CD8-positive, alpha-beta T cell (primary cell): ENCODE measurements at regions of chr2 and their contacts with region 1.

Region 1: GRCh38 chr2:112726497-112727190 is 5.8 kb downstream of the NT5DC4 start:
- DNase-seq: peak; percentile 74 to 93 (median 85)
- ATAC-seq: peak; percentile 99
- H3K4me3 ChIP-seq: no peak overlapping the region
- H3K4me3 Mint-ChIP-seq: no peak overlapping the region
- H3K27ac ChIP-seq: no peak overlapping the region
- H3K27ac Mint-ChIP-seq: no peak overlapping the region
- H3K4me1 ChIP-seq: no peaks in the 10 kb centered on the region
- H3K4me1 Mint-ChIP-seq: peaks cover 4% of the 10 kb centered on the region
- H3K27me3 ChIP-seq: no peaks in the 10 kb centered on the region
- H3K27me3 Mint-ChIP-seq: peaks cover 3% of the 10 kb centered on the region
- CTCF ChIP-seq: peak; percentile 87

Region 2: DNA sequence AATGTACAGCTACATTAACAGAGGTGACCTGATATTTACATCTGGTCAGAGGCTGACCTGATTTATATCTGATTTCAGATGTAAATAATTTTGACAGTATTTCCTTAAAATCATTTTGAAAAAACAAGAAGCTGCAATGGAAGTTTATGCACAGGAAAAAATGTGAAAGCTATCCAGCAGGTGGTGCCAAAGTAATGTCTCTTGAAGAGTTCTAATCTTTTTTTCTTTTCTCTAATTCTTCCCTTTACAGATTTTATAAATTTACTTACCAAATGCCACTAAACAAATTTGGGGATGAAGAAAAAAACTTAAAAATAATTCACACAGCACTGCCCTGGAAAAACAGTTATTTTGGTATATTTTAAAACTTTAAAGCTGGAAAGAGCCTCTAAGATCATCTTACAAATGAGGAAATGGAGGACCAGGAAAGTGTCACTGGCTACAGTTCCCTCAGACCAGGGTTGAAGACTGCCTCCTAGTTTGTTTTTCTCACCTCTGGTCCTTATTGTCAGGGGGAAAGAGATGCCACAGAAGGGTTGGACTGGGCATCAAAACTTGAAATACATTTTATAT is 604.9 kb before region 1 on chr2:
- CTCF ChIA-PET with region 1: no interaction called
- POLR2A ChIA-PET with region 1: no interaction called
- intact Hi-C with region 1: loop called in 1 of 2 experiments (anchors 10 kb)
- DNase-seq: peak in 7 of 9 experiments; percentile 21 to 70 (median 53)
- ATAC-seq: peak; percentile 42
- H3K4me3 ChIP-seq: no peak overlapping the region
- H3K4me3 Mint-ChIP-seq: no peak overlapping the region
- H3K27ac ChIP-seq: no peak overlapping the region
- H3K27ac Mint-ChIP-seq: no peak overlapping the region
- H3K4me1 ChIP-seq: no peaks in the 10 kb centered on the region
- H3K4me1 Mint-ChIP-seq: no peaks in the 10 kb centered on the region
- H3K27me3 ChIP-seq: no peaks in the 10 kb centered on the region
- H3K27me3 Mint-ChIP-seq: no peaks in the 10 kb centered on the region
- CTCF ChIP-seq: peak; percentile 85

Region 3: DNA sequence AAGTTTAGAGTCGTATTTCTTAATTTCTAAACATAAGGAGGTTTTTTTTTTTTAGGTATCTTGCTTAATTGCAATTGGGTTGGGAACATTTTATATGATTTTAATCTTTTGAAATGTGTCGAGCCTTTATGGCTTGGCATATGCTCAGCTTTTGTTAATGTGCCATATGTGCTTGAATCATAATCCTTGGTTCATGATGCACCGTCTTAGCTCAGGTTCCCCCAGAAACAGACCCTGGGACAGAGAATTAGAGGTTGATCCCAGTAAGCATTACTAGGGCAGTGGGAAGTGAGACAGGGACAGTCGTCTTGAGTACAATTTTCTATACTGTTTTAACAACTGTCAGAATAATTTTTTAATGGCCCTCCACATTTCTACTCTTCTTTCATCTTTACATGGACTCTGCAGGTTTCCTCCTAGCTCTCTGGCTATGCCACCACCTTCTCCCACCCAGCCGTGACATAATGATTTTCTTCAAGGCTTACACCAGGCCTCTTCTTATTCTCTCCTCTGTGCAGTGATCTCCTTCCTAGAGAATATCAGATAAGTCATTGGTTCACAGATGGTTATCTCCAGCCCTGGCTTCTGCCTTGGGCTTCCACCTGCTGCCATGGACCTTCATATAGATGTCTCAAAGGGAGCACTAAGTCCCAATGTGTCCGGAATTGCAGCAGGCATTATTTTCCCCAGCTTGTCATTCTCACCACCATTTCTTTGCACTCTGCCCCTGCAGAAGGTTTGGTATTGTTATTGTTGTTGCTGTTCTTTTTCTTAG is 132.7 kb before region 1 on chr2:
- CTCF ChIA-PET with region 1: interaction called, 191 read pairs
- POLR2A ChIA-PET with region 1: no interaction called
- intact Hi-C with region 1: no loop called
- DNase-seq: no peak
- ATAC-seq: no peak
- H3K4me3 ChIP-seq: no peak overlapping the region
- H3K4me3 Mint-ChIP-seq: no peak overlapping the region
- H3K27ac ChIP-seq: no peak overlapping the region
- H3K27ac Mint-ChIP-seq: no peak overlapping the region
- H3K4me1 ChIP-seq: no peaks in the 10 kb centered on the region
- H3K4me1 Mint-ChIP-seq: no peaks in the 10 kb centered on the region
- H3K27me3 ChIP-seq: no peaks in the 10 kb centered on the region
- H3K27me3 Mint-ChIP-seq: no peaks in the 10 kb centered on the region
- CTCF ChIP-seq: no peak

Region 4: DNA sequence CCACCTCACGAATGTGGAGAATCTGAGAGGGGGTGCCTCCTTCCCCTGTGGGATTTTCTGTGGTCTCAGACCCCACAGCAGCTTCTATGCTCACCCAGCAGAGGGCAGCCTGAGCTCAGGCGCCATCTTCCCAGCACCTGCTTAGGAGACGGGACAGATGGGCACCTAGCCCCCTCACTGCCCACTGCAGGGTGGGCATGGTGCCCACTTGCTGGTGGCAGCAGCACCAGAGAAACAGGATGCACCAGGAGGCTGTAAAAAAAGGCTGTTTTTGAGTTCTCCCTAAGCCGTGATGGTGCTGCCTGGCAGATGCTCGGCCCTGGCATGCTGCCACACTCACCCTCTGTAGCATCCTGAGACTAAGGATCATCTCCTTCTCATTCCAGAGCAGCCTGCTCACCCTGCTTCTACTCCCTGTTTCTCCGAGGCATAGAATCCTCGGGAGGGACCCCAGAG is 100.0 kb before region 1 on chr2:
- CTCF ChIA-PET with region 1: interaction called, 205 read pairs
- POLR2A ChIA-PET with region 1: no interaction called
- intact Hi-C with region 1: loop called (anchors 1 kb)
- DNase-seq: peak; percentile 36 to 87 (median 65)
- ATAC-seq: peak; percentile 43
- H3K4me3 ChIP-seq: peak overlapping the region; percentile 23 to 52
- H3K4me3 Mint-ChIP-seq: peak overlapping the region; percentile 68
- H3K27ac ChIP-seq: peak overlapping the region; percentile 3 to 41
- H3K27ac Mint-ChIP-seq: peak overlapping the region; percentile 83
- H3K4me1 ChIP-seq: peaks cover 64% of the 10 kb centered on the region
- H3K4me1 Mint-ChIP-seq: peaks cover 54% of the 10 kb centered on the region
- H3K27me3 ChIP-seq: no peaks in the 10 kb centered on the region
- H3K27me3 Mint-ChIP-seq: no peaks in the 10 kb centered on the region
- CTCF ChIP-seq: peak; percentile 83

Region 5: GRCh38 chr2:112706170-112706664 is 20.4 kb before region 1 on chr2:
- CTCF ChIA-PET with region 1: interaction called, 29 read pairs
- POLR2A ChIA-PET with region 1: no interaction called
- intact Hi-C with region 1: no loop called
- DNase-seq: peak in 8 of 9 experiments; percentile 30 to 74 (median 58)
- ATAC-seq: peak; percentile 90
- H3K4me3 ChIP-seq: no peak overlapping the region
- H3K4me3 Mint-ChIP-seq: no peak overlapping the region
- H3K27ac ChIP-seq: no peak overlapping the region
- H3K27ac Mint-ChIP-seq: no peak overlapping the region
- H3K4me1 ChIP-seq: peaks cover 14% of the 10 kb centered on the region
- H3K4me1 Mint-ChIP-seq: peaks cover 19% of the 10 kb centered on the region
- H3K27me3 ChIP-seq: no peaks in the 10 kb centered on the region
- H3K27me3 Mint-ChIP-seq: peaks cover 3% of the 10 kb centered on the region
- CTCF ChIP-seq: no peak

Region 6: DNA sequence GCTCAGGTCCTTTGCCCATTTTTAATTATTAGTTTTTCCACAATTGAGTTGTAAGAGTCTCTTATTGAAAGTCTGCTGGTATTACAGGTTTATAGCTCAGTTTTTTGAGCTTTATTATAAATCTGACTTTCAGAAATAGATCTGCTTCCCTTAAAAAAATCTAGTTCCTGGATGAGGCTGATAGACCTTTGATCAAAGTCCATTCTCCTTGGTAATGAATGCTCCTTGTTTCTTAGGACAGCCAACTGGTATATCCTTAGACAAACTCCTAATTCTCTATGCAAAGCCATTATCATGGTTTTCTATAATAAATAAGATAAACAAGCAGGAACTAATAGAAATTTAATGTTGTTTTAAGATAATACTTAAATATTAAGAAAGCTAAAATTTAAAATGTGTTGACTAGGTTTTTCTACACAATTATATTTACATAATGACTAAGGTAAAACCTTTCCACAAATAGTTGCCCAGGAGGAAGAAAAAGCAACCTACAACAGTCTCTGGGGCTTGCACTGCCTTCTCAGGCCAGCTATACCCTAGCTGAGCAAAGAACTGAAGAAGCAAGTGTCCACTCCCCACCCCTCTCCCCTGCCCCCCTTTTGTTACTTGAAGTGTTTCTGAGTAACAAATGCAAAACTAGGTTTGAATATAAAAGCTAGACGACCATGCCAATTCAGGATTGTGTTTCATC is 11.0 kb after region 1 on chr2:
- CTCF ChIA-PET with region 1: interaction called, 30 read pairs
- POLR2A ChIA-PET with region 1: no interaction called
- intact Hi-C with region 1: no loop called
- DNase-seq: no peak
- ATAC-seq: no peak
- H3K4me3 ChIP-seq: no peak overlapping the region
- H3K4me3 Mint-ChIP-seq: no peak overlapping the region
- H3K27ac ChIP-seq: no peak overlapping the region
- H3K27ac Mint-ChIP-seq: no peak overlapping the region
- H3K4me1 ChIP-seq: no peaks in the 10 kb centered on the region
- H3K4me1 Mint-ChIP-seq: no peaks in the 10 kb centered on the region
- H3K27me3 ChIP-seq: no peaks in the 10 kb centered on the region
- H3K27me3 Mint-ChIP-seq: no peaks in the 10 kb centered on the region
- CTCF ChIP-seq: no peak